ENCODE measurements at regions of chr19 and their contacts with region 1.

Region 1: DNA sequence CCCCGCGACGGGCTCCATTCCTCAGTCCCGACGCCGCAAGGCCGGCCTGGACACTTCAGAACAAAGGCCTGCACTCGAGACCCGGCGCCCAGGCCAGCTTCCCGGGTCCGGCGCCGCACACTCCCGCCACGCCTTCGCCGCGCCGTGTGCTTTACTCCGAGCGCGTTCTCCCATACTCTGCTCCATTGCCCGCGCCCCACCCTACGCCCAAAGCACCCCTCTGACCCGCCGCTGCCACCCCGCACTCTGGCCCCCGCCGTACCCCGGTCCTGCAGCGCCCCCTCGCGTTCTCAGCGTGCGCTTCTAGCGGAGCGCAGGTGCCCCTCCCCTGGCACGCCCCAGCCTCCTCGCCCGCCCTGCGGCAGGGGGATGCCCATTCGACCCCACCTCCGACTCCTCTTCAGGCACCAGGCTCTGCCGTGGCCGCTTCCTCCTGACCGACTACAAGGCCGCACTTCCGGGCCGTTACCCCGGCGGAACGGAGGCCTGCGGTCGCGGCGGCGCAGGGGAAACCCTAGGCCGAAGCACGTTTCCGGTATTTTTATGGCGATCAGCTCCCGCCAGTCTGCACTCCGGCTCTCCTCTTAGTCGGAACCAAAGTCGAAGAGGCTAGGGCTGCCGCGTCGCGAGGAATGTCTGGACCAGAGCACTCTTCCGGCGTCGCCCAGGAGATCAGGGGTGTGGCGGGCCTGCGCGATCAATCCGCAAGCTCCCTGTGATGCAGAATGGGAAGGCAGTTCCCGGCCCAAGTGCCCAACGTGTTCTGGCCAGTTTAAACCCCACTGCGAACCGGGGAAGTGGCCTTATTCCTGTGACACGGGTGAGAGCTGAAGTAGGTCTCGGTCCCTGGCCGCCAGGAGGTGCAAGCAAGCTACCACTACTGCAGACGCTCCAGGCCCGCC is at the start of gene ZBTB45:
- H3K4me3 Mint-ChIP-seq: peak within 1 kb of the TSS; percentile 96
- H3K27ac Mint-ChIP-seq: peak within 1 kb of the TSS; percentile 95
- H3K4me1 Mint-ChIP-seq: peaks cover 60% of the 10 kb centered on the region
- H3K27me3 Mint-ChIP-seq: no peaks in the 10 kb centered on the region

Region 2: GRCh38 chr19:58305065-58305931 is 214.3 kb before region 1 on chr19 and contains the start of gene ERVK3-1:
- intact Hi-C with region 1: no loop called
- H3K4me3 Mint-ChIP-seq: peak within 1 kb of the TSS; percentile 95
- H3K27ac Mint-ChIP-seq: peak within 1 kb of the TSS; percentile 97
- H3K4me1 Mint-ChIP-seq: peaks cover 14% of the 10 kb centered on the region
- H3K27me3 Mint-ChIP-seq: no peaks in the 10 kb centered on the region

Region 3: GRCh38 chr19:58476498-58477015 is 43.0 kb before region 1 on chr19:
- intact Hi-C with region 1: no loop called
- H3K4me3 Mint-ChIP-seq: peak overlapping the region; percentile 92
- H3K27ac Mint-ChIP-seq: peak overlapping the region; percentile 97
- H3K4me1 Mint-ChIP-seq: peaks cover 26% of the 10 kb centered on the region
- H3K27me3 Mint-ChIP-seq: no peaks in the 10 kb centered on the region

Region 4: DNA sequence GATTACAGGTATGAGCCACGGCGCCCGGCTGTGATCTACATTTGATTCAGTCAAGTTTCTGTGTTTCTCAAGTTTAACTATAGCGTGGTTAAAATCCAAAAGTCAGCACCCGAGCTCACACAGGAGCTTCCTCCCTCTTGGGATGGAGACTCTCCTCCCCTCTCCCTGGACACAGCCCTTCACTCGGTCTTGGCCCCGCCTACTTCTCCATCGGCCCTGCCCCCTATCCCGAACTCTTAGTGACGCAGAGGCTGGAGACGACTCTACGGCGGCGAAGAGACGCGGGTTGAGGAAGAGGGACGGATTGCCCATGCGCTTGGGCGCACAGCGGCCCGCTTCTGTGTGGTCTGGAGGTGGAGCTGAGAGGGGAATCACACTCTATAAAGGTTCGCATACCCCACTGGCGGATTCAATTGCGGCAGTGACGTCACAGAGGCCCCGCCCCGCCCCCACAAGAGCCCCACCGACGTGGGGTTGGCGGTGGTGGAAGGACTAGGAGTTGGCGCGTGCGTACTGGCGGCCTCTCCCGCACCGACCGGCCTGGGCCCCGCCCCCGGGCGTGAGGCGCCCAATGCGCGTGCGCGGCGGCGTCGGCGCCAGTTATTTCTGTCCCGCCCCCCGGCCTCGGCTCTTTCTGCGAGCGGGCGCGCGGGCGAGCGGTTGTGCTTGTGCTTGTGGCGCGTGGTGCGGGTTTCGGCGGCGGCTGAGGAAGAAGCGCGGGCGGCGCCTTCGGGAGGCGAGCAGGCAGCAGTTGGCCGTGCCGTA is 24.4 kb after region 1 on chr19 and contains the start of gene TRIM28:
- intact Hi-C with region 1: loop called (anchors 2 kb)
- H3K4me3 Mint-ChIP-seq: peak within 1 kb of the TSS; percentile 92
- H3K27ac Mint-ChIP-seq: peak within 1 kb of the TSS; percentile 95
- H3K4me1 Mint-ChIP-seq: peaks cover 42% of the 10 kb centered on the region
- H3K27me3 Mint-ChIP-seq: no peaks in the 10 kb centered on the region

Region 5: GRCh38 chr19:58572818-58573657 is 53.4 kb after region 1 on chr19 and contains the start of gene MZF1:
- intact Hi-C with region 1: loop called (anchors 2 kb)
- H3K4me3 Mint-ChIP-seq: peak within 1 kb of the TSS; percentile 85
- H3K27ac Mint-ChIP-seq: peak within 1 kb of the TSS; percentile 98
- H3K4me1 Mint-ChIP-seq: peaks cover 47% of the 10 kb centered on the region
- H3K27me3 Mint-ChIP-seq: no peaks in the 10 kb centered on the region